ENCODE measurements at regions of chr12 and their contacts with region 1.

Region 1: GRCh38 chr12:1795785-1796514 is 24.4 kb upstream of the LRTM2 start:
- DNase-seq: peak; percentile 94 to 97
- ATAC-seq: peak; percentile 90 to 92 (median 92)
- H3K4me3 ChIP-seq: peak overlapping the region; percentile 71
- H3K27ac ChIP-seq: peak overlapping the region; percentile 80
- H3K4me1 ChIP-seq: peaks cover 17% of the 10 kb centered on the region
- H3K27me3 ChIP-seq: no peaks in the 10 kb centered on the region
- CTCF ChIP-seq: peak; percentile 99

Region 2: GRCh38 chr12:1463073-1463905 is 332.7 kb before region 1 on chr12:
- intact Hi-C with region 1: no loop called
- DNase-seq: no peak
- ATAC-seq: peak in 3 of 4 donors; percentile 30 to 58 (median 42)
- H3K4me3 ChIP-seq: no peak overlapping the region
- H3K27ac ChIP-seq: no peak overlapping the region
- H3K4me1 ChIP-seq: peaks cover 12% of the 10 kb centered on the region
- H3K27me3 ChIP-seq: no peaks in the 10 kb centered on the region
- CTCF ChIP-seq: no peak

Region 3: DNA sequence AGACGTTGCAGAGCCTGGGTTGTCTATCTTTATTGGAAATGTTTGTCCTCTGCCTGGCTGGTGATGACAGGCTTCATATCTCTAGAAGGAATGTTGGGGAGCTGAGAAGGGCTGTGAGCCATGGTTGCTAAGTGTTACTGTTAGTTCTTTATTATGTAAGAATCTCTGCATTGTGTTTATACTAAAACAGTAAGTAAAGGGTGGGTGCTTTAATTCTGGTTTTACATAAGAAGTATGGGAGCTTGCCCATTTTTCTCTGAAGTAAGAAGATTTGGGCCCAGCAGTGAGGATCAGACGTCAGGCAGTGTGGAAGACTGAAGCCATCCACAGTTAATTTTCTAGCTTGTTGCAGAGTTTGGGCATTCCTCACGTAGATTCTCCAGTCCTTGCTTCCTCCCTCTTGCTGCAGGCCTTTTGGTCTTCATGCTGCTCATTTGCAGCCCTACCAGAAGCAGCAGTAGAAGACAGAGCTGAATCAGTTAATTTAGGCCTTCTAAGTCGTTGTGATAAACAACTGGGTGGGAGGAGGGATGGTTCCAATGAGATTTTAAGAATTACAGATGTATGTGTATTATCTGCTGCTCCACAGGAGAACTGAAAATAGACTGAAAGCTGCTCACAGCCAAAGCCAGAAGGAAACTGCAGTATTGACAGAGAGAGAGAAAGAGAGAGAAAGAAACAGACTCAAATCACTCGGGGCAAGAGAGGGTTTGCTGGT is 145.5 kb before region 1 on chr12:
- intact Hi-C with region 1: loop called (anchors 1 to 2 kb)
- DNase-seq: no peak
- ATAC-seq: no peak
- H3K4me3 ChIP-seq: no peak overlapping the region
- H3K27ac ChIP-seq: no peak overlapping the region
- H3K4me1 ChIP-seq: no peaks in the 10 kb centered on the region
- H3K27me3 ChIP-seq: peaks cover 0 to 2% (median 0%) of the 10 kb centered on the region in 3 donors
- CTCF ChIP-seq: no peak

Region 4: DNA sequence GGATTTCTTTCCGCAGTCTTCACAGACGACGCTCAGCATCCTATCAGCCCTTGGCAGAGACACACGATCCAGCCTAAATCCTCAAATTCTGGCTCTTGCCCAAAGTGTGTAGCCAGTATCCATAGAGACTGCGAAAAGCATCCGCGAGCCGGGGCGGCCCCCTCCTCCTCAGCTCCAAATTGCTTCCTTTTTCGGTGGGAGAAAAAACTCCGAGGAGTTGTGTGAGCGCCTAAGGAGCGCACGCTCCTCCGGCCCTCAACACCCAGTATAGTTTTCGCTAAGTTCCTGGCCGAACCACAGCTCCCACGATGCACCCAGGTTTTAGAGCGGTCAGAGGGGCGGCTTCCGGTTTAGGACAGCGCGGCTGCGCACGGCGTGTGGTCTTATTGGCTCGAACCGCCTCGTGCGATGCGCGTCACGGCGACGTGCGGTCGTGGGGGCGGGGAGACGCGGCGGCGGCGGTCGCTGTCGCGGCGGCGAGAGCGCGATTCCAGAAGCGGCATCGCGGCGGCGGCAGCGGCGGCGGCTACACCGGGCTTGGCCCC is 105.3 kb before region 1 on chr12 and contains the start of gene ADIPOR2:
- intact Hi-C with region 1: loop called in 1 of 2 experiments (anchors 5 kb)
- DNase-seq: peak; percentile 94 to 98
- ATAC-seq: peak; percentile 99 to 100 (median 99)
- H3K4me3 ChIP-seq: peak within 1 kb of the TSS; percentile 99
- H3K27ac ChIP-seq: peak within 1 kb of the TSS; percentile 97
- H3K4me1 ChIP-seq: peaks cover 30% of the 10 kb centered on the region
- H3K27me3 ChIP-seq: no peaks in the 10 kb centered on the region
- CTCF ChIP-seq: no peak
- total RNA-seq, gene ADIPOR2: 36.7 to 49.4 (median 43.2) TPM

Region 5: DNA sequence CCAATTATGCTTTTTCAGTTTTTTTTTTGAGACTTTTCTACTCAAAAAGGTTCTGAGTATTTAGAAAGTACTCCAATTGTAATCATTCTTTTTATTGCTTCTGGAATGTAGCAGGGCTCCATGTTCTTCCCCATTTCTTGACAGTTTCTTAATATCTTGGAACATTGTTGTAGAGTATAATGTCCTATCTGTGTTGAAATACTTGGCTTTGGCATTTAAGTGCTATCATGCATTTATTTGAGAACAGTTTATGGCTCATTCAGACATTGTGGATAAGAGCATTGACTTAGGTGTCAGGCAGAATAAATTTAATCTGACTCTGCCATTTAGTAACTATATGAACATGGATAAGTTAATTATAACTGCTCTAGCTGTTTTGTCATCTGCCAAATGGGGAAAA is 76.8 kb before region 1 on chr12:
- intact Hi-C with region 1: no loop called
- DNase-seq: no peak
- ATAC-seq: peak in 2 of 4 donors; percentile 14 to 42
- H3K4me3 ChIP-seq: no peak overlapping the region
- H3K27ac ChIP-seq: peak overlapping the region; percentile 71
- H3K4me1 ChIP-seq: peaks cover 71% of the 10 kb centered on the region
- H3K27me3 ChIP-seq: no peaks in the 10 kb centered on the region
- CTCF ChIP-seq: no peak

Region 6: DNA sequence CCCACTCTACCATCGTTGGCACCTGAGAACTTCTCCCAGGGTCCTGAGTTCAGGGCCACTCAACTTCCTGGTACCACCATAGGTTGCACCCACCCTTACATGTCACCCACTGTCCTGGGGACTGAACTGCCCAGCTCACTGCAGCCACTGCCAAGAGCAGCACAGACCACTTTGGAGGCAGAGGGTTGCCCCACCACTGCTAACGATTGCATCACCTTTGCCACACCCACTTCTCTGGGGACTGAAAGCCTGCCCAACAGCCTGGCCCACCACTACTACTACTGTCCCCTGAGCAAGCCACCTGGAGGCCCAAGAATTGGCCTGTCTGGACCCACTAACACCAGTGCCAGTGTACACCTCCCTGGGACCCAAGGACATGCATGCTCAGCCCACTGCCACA is 94.9 kb after region 1 on chr12:
- intact Hi-C with region 1: no loop called
- DNase-seq: no peak
- ATAC-seq: no peak
- H3K4me3 ChIP-seq: no peak overlapping the region
- H3K27ac ChIP-seq: no peak overlapping the region
- H3K4me1 ChIP-seq: no peaks in the 10 kb centered on the region
- H3K27me3 ChIP-seq: no peaks in the 10 kb centered on the region
- CTCF ChIP-seq: no peak

Region 7: GRCh38 chr12:1939801-1940607 is 144.1 kb after region 1 on chr12:
- intact Hi-C with region 1: loop called (anchors 1 kb)
- DNase-seq: peak; percentile 84 to 93
- ATAC-seq: peak; percentile 72 to 82 (median 76)
- H3K4me3 ChIP-seq: peak overlapping the region; percentile 26
- H3K27ac ChIP-seq: peak overlapping the region; percentile 31
- H3K4me1 ChIP-seq: peaks cover 30% of the 10 kb centered on the region
- H3K27me3 ChIP-seq: no peaks in the 10 kb centered on the region
- CTCF ChIP-seq: peak; percentile 98

Region 8: DNA sequence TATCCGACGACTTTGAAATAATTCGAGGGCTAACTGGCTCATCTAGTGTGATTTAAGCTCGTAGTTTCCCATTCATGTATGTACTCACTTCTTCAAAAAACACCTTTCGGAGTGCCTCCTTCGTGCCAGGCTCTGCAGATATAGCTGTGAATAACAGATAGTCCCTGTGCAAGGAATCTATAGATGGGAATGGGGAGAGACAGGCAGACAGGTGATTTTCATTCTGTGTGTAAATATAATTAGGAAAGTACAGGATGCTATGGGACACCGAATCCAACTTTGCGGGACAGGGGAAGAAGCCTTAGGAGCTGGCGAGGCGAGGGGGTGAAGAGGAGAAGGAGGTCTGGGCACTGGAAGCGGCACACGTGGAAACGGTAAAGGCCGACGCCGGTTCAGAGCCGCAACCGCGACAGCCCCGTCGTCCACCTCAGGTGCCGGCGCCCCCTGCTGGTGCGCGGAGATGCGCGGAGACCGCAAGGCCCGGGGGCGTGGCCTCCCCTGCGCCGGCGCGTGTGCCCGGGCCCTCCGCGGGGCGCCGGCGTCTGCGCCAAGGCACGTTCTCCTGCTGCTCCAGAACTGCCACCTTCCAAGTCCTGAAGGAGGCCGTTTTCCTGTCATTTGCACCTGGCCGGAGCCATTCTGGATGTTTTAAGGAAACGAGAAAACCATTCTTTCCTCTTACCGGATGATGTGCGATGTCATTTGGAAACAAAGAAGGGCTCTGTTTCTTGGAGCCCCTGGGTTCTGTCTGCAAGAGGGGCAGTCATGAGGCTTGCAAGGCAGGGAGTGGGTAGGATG is 238.9 kb after region 1 on chr12:
- intact Hi-C with region 1: loop called in 1 of 2 experiments (anchors 5 kb)
- DNase-seq: peak; percentile 90 to 92
- ATAC-seq: peak; percentile 93 to 100 (median 98)
- H3K4me3 ChIP-seq: peak overlapping the region; percentile 60
- H3K27ac ChIP-seq: no peak overlapping the region
- H3K4me1 ChIP-seq: peaks cover 13% of the 10 kb centered on the region
- H3K27me3 ChIP-seq: peaks cover 0 to 18% (median 0%) of the 10 kb centered on the region in 3 donors
- CTCF ChIP-seq: peak; percentile 95